Dorsolateral prefrontal cortex (tissue), 120 donors: ENCODE measurements at regions of chr10 and their contacts with region 1.

Region 1: GRCh38 chr10:58952747-58953466 is 223.5 kb upstream of the PHYHIPL start:
- DNase-seq: peak in 4 of 10 donors; percentile 36 to 83 (median 50)
- H3K4me3 ChIP-seq: no peak overlapping the region
- H3K27ac ChIP-seq: peak overlapping the region in 57 of 59 donors; percentile 10 to 91 (median 74)
- H3K27me3 ChIP-seq: no peaks in the 10 kb centered on the region
- CTCF ChIP-seq: peak; percentile 70 to 97 (median 87)

Region 2: GRCh38 chr10:58513188-58514110 is 439.5 kb before region 1 on chr10:
- intact Hi-C with region 1: no loop called
- DNase-seq: peak in 6 of 10 donors; percentile 7 to 47 (median 33)
- H3K4me3 ChIP-seq: peak overlapping the region; percentile 35 to 87 (median 73)
- H3K27ac ChIP-seq: peak overlapping the region in 19 of 59 donors; percentile 2 to 77 (median 44)
- H3K27me3 ChIP-seq: no peaks in the 10 kb centered on the region
- CTCF ChIP-seq: no peak

Region 3: DNA sequence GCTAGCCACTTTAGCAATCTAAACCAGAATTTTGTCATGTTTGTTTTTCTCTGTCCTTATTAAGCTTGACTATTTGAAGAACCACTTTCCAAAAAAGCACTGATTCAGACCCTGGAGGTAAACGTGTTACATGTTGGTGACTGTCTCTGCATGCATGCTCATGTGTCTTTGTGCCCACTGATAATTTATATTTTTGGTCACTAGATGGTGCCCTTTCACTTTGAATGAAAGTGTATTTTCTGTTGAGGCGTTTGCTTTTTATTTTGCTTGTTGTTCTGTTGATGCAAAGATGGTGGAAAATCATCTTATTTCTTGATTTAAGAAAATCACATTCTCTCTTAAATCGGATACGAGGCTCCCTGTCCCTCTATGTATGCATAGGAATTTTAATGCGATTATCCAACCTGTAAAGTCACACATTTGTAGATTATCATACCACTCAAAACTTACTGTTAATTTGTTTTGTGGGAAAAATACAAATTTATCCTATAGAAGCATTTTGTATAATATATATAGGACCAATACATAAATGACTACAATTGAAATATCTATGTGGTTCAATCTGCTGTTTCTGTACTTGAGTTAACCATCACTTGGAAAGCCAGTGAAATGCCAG is 170.9 kb before region 1 on chr10:
- intact Hi-C with region 1: loop called (anchors 5 to 10 kb)
- DNase-seq: no peak
- H3K4me3 ChIP-seq: peak overlapping the region in 1 of 59 donors; percentile 11
- H3K27ac ChIP-seq: peak overlapping the region in 9 of 59 donors; percentile 22 to 64 (median 33)
- H3K27me3 ChIP-seq: no peaks in the 10 kb centered on the region
- CTCF ChIP-seq: peak; percentile 44 to 91 (median 77)

Region 4: GRCh38 chr10:59006511-59007306 is 53.8 kb after region 1 on chr10:
- intact Hi-C with region 1: no loop called
- DNase-seq: no peak
- H3K4me3 ChIP-seq: peak overlapping the region in 3 of 59 donors; percentile 5 to 22 (median 10)
- H3K27ac ChIP-seq: peak overlapping the region in 58 of 59 donors; percentile 28 to 100 (median 97)
- H3K27me3 ChIP-seq: no peaks in the 10 kb centered on the region
- CTCF ChIP-seq: no peak

Region 5: DNA sequence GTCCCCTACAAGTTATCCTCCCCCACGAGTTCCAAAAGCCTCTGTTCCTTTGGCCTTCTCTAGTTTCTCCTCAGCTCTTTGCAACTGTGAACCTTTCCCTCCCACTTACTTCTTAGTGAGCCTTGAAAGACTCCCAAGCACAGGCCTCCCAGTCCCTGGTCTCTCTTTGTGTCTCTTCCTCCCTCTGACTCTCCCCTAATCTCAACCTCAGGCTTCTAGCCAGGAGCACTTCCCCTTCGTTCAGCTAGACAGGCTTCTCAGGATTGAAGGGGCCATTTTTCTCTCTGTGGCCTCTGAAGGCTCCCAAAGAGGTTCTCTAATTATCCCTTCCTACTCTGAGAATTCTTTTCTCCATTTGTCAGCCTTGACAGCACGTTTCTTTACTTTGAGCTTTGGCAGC is 173.4 kb after region 1 on chr10:
- intact Hi-C with region 1: loop called in 1 of 2 experiments (anchors 2 kb)
- DNase-seq: no peak
- H3K4me3 ChIP-seq: no peak overlapping the region
- H3K27ac ChIP-seq: peak overlapping the region in 16 of 59 donors; percentile 4 to 56 (median 20)
- H3K27me3 ChIP-seq: no peaks in the 10 kb centered on the region
- CTCF ChIP-seq: no peak

Region 6: DNA sequence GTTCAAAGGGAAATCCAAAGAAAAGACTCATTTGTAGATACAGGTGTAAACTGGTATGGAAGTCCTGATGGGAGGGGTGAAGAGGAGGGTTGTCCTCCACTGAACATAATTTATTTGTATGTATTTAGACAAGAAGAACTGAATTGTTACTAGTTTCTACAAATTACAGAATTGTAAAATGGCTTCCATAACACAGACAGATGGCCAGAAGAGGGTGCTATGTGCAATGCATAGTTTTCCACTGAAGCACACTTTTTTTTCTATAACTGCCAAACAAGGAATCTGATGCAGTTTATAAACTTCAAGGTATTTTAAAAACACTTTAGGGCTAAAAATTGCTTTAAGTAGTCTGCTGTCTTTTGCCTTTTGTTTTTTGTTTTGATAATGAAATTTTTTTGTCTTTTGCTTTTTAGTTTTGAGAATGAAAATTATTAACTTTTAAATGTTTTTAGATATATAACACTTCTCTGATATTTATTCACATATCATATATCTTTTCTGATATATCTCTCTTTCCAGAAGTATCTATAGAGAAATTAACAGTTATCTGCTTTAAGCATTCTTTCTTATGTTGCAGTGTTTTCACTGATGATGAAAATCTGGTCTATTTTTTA is 282.0 kb after region 1 on chr10:
- intact Hi-C with region 1: loop called in 1 of 2 experiments (anchors 5 kb)
- DNase-seq: no peak
- H3K4me3 ChIP-seq: no peak overlapping the region
- H3K27ac ChIP-seq: peak overlapping the region in 39 of 59 donors; percentile 0 to 84 (median 47)
- H3K27me3 ChIP-seq: no peaks in the 10 kb centered on the region
- CTCF ChIP-seq: peak; percentile 34 to 83 (median 68)

Region 7: DNA sequence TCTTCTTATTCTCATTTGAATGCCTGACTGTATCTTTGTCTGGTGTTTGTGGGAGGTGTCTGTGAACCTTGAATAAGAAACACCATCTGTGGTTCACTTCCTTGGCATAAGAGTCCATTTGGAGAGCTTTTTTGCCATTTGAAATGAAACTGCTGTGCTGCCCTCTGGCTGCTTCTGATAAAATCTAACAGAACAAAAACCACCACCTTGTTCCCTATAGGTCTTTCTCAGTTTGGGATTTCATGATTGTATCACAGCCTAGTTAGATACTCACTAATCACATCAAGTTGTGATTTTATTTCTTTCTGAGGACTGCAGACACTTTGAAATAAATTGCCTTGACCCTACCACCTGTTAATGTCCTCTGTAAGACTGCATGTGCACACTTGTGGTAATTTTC is 512.2 kb after region 1 on chr10:
- intact Hi-C with region 1: loop called in 1 of 2 experiments (anchors 10 kb)
- DNase-seq: peak in 2 of 10 donors; percentile 5 to 37
- H3K4me3 ChIP-seq: no peak overlapping the region
- H3K27ac ChIP-seq: peak overlapping the region in 3 of 59 donors; percentile 7 to 48 (median 23)
- H3K27me3 ChIP-seq: no peaks in the 10 kb centered on the region
- CTCF ChIP-seq: peak; percentile 15 to 81 (median 64)

Region 8: DNA sequence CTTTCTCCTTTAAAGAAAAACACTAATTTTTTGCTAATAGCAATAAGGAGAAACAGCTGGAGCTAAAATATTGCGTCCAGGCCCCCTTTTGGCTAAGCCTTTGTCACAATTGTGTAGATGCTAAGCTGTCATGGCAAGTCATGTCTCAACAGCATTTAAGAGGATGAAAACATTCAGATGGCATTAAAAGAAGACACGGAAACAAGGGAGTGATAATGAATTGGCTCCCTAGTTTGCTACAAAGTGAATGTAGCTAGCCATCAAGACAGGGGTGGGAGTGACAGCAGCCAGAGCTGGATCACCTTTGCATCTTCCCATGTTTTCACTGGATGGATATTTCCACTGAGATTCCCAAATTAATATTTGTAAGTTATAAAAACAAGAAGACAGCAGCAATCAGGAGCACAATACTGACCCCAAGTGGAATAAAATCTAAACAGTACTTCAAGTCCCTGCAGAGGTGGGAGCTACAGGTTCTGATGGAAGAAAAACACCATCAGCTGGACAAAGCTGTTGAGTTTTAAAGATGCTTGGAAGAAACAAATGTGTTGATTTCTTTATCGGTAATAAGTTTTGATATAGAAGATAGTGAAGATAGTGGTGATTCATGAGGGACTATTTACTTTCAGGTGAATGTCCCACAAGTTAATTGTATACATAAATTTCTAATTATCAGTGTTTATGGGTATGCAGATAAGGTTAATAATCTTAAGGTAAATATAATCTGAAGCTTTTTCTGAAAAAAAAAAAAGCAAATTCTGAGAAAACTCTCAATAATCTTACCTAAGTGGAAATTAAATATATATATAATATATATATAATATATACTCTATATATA is 627.3 kb after region 1 on chr10:
- intact Hi-C with region 1: loop called (anchors 10 kb)
- DNase-seq: no peak
- H3K4me3 ChIP-seq: peak overlapping the region in 1 of 59 donors; percentile 22
- H3K27ac ChIP-seq: peak overlapping the region in 33 of 59 donors; percentile 2 to 81 (median 46)
- H3K27me3 ChIP-seq: no peaks in the 10 kb centered on the region
- CTCF ChIP-seq: peak; percentile 35 to 86 (median 72)

Region 9: DNA sequence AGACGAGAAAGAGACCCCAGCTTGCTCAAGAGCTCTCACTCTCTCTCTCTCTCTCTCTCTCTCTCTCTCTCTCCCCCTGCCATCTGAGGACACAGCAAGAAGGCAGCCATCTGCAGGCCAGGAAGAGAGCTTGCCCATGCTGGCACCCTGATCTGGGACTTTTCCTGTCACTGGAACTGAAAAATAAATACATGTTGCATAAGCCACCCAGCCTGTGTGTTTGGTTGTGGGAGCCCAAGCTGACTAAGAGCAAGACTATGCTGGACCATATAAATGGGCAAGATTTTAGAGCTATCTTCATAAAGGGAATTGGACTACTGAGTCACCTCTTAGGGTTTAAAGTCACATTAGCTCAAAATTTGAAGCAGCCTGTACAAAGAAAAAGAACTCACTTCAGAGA is 658.1 kb after region 1 on chr10:
- intact Hi-C with region 1: loop called in 1 of 2 experiments (anchors 10 kb)
- DNase-seq: no peak
- H3K4me3 ChIP-seq: no peak overlapping the region
- H3K27ac ChIP-seq: no peak overlapping the region
- H3K27me3 ChIP-seq: no peaks in the 10 kb centered on the region
- CTCF ChIP-seq: no peak